PC-9 (cell line): ENCODE measurements at regions of chr7 and their contacts with region 1.

Region 1: GRCh38 chr7:19708397-19709248 is at the start of gene POLR1F:
- DNase-seq: peak; percentile 93 to 95
- H3K4me3 ChIP-seq: peak within 1 kb of the TSS; percentile 87
- H3K27ac ChIP-seq: peak within 1 kb of the TSS; percentile 35
- H3K4me1 ChIP-seq: peaks cover 22% of the 10 kb centered on the region
- H3K27me3 ChIP-seq: no peaks in the 10 kb centered on the region
- CTCF ChIP-seq: peak; percentile 97
- total RNA-seq, gene POLR1F: 14.5 and 14.8 TPM in 2 replicates

Region 2: GRCh38 chr7:19482628-19483027 is 226.0 kb before region 1 on chr7:
- CTCF ChIA-PET with region 1: no interaction called
- POLR2A ChIA-PET with region 1: no interaction called
- intact Hi-C with region 1: no loop called
- DNase-seq: no peak
- H3K4me3 ChIP-seq: no peak overlapping the region
- H3K27ac ChIP-seq: no peak overlapping the region
- H3K4me1 ChIP-seq: no peaks in the 10 kb centered on the region
- H3K27me3 ChIP-seq: no peaks in the 10 kb centered on the region
- CTCF ChIP-seq: no peak

Region 3: GRCh38 chr7:19665399-19666008 is 43.1 kb before region 1 on chr7:
- CTCF ChIA-PET with region 1: no interaction called
- POLR2A ChIA-PET with region 1: no interaction called
- intact Hi-C with region 1: no loop called
- DNase-seq: no peak
- H3K4me3 ChIP-seq: no peak overlapping the region
- H3K27ac ChIP-seq: no peak overlapping the region
- H3K4me1 ChIP-seq: peaks cover 10% of the 10 kb centered on the region; the same call in 1 of the 2 replicates
- H3K27me3 ChIP-seq: no peaks in the 10 kb centered on the region
- CTCF ChIP-seq: peak; percentile 90

Region 4: DNA sequence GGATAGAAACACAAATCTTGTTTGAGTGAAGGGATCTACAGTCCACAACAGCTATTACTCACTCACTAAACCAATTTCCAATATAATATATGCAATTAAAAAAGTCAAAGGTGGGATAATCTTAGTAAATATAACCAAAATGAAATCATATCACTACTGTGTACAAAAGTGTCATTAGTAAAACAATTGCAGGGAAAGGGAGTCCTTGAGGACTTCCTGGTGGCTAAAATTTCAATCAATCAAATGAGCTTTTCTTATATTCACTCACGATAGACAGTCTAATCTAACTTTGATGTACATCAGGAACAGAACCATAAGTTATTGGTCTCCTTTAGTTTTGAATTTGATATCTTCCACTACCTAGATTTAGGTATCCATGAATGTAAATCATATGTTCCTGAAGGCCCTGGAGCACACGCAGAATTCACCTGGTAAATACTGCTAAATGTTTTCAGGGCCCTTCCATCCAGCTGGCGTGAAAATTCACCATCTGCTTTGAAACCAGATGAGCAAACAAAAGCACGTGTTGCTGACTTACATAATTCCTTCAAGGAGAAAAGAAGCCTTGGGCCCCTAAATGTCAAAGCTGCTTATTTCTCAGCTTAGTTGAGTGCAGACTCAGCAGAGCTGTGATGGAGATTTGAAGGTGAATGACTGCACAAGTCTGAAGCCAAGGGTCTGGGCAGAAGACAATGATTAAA is 224.1 kb after region 1 on chr7:
- CTCF ChIA-PET with region 1: no interaction called
- POLR2A ChIA-PET with region 1: no interaction called
- intact Hi-C with region 1: no loop called
- DNase-seq: no peak
- H3K4me3 ChIP-seq: no peak overlapping the region
- H3K27ac ChIP-seq: no peak overlapping the region
- H3K4me1 ChIP-seq: no peaks in the 10 kb centered on the region
- H3K27me3 ChIP-seq: no peaks in the 10 kb centered on the region
- CTCF ChIP-seq: no peak

Region 5: DNA sequence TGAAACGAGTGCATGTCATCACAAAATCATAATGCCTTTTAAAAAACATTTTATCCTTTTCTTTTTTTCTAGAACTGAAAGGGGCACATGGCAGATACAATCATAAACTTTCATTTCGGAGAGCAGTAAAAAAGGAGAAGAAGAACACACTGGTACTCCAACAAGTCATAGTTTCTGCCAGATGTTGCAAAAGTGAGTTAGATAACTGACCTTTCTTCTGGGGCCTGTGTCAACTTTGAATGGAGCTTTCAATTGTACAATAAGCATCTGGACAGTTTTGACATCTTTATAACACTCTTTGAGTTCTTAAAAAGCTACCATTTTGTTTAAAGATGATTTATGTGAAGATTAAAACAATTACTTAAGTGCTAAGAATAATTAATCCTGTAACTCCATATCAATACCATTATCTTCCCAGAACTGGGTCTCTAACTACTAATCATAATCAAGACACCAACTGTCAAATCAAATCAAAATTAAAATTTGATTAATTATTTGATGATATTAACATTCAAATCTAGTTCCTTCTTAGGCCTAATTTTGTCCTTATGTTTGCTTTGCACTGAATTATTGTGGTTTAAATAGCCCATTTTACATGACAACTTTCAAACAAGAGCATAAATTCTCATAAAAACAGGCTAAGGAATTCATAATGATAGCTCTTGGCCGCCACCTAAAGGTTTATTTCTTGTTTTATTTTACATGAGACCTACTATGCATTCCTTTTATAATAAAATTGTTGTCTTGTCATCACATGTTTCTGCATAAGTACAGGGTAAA is 602.5 kb after region 1 on chr7:
- CTCF ChIA-PET with region 1: interaction called, 6 read pairs
- POLR2A ChIA-PET with region 1: no interaction called
- intact Hi-C with region 1: loop called (anchors 2 kb)
- DNase-seq: peak in 1 of 2 experiments; percentile 56
- H3K4me3 ChIP-seq: no peak overlapping the region
- H3K27ac ChIP-seq: no peak overlapping the region
- H3K4me1 ChIP-seq: no peaks in the 10 kb centered on the region
- H3K27me3 ChIP-seq: no peaks in the 10 kb centered on the region
- CTCF ChIP-seq: peak; percentile 92

Region 6: GRCh38 chr7:20598459-20599309 is 890.1 kb after region 1 on chr7:
- CTCF ChIA-PET with region 1: interaction called, 61 read pairs
- POLR2A ChIA-PET with region 1: interaction called, 5 read pairs
- intact Hi-C with region 1: loop called (anchors 1 kb)
- DNase-seq: peak; percentile 4 to 71
- H3K4me3 ChIP-seq: no peak overlapping the region
- H3K27ac ChIP-seq: no peak overlapping the region
- H3K4me1 ChIP-seq: no peaks in the 10 kb centered on the region; the same call in 1 of the 2 replicates
- H3K27me3 ChIP-seq: no peaks in the 10 kb centered on the region
- CTCF ChIP-seq: peak; percentile 97

Region 7: DNA sequence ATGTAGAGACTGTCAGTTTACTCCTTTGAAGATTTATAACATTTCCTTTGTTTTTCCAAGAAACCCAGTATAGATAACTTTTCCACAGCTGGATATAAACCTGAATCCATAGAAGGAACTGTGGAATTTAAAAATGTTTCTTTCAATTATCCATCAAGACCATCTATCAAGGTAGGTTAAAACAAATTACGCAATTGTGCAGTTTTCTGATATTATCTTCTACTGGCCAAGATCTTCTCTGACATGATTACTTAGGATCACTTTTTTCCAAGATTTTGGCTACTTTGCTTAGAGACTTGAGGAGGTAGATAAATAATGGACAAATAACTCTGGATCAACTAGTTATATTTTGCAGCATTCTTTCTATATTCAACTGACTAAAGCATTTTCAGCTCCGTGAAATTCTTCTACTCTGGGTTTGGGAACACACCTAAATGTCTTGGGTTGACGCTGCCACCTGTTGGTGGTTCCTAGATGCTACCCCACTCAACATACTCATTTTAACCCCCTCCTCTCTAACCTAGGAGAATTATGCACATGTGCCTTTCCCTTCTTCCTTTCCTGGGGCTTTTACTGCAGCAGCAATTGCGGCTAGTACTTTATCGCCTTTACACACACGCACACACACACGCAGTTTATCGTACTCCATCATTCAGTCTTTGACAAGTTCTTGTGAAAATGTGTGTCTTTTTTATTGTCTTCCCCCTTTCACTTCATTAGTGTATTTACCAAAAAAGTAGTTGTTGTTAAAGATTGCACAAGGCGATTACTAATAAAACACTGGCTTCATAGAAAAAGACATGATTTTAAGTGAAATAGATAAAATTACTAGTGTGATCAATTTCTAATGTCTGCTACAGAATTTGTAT is 939.5 kb after region 1 on chr7:
- CTCF ChIA-PET with region 1: interaction called, 4 read pairs
- POLR2A ChIA-PET with region 1: no interaction called
- intact Hi-C with region 1: loop called (anchors 1 kb)
- DNase-seq: peak in 1 of 2 experiments; percentile 35
- H3K4me3 ChIP-seq: no peak overlapping the region
- H3K27ac ChIP-seq: no peak overlapping the region
- H3K4me1 ChIP-seq: no peaks in the 10 kb centered on the region
- H3K27me3 ChIP-seq: no peaks in the 10 kb centered on the region
- CTCF ChIP-seq: peak; percentile 69

Region 8: GRCh38 chr7:20798081-20798693 is 1089.6 kb after region 1 on chr7:
- CTCF ChIA-PET with region 1: no interaction called
- POLR2A ChIA-PET with region 1: no interaction called
- intact Hi-C with region 1: loop called (anchors 5 kb)
- DNase-seq: peak; percentile 34 to 73
- H3K4me3 ChIP-seq: peak overlapping the region; percentile 54; the same call in 1 of the 2 replicates
- H3K27ac ChIP-seq: no peak overlapping the region
- H3K4me1 ChIP-seq: no peaks in the 10 kb centered on the region
- H3K27me3 ChIP-seq: peaks cover 16% of the 10 kb centered on the region; the same call in 1 of the 2 replicates
- CTCF ChIP-seq: no peak

Region 9: DNA sequence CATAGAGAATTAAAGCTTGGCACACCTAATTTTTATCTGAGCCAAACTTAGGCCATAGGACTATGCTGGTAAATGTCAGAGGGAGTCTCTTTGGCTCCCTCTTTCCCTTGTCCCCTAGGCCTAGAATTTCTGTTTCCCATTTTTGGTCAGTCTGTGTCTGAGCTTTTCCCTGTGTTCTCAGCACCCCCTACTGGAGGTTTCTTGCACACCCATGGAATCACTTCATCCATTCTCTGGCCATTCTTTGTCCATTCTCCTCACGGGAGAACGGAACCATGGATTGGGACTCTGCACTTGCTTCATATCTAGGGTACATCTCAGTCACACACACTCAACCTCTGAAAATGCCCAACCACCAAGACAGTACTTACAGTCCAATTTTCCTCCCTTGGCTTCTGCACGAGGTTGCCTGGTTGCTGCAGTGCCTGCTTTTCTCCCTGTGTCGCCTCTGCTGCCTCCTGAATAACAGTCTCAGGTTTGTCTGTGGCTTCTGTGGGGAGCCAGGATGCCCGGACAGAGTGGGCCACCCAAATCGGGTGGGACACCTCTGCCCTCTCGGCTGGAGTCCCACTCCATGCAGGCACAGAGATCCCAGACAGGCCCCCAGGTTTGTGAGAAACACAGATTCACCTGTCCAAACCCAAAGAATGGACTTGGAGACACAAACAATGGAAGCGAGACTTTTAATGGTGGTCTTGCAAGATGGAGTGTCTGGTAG is 1799.2 kb after region 1 on chr7:
- CTCF ChIA-PET with region 1: no interaction called
- POLR2A ChIA-PET with region 1: no interaction called
- intact Hi-C with region 1: loop called (anchors 10 kb)
- DNase-seq: peak in 1 of 2 experiments; percentile 34
- H3K4me3 ChIP-seq: no peak overlapping the region
- H3K27ac ChIP-seq: no peak overlapping the region
- H3K4me1 ChIP-seq: peaks cover 10% of the 10 kb centered on the region
- H3K27me3 ChIP-seq: no peaks in the 10 kb centered on the region
- CTCF ChIP-seq: peak; percentile 89